Caco-2 (cell line): ENCODE measurements at regions of chr7 and their contacts with region 1.

Region 1: DNA sequence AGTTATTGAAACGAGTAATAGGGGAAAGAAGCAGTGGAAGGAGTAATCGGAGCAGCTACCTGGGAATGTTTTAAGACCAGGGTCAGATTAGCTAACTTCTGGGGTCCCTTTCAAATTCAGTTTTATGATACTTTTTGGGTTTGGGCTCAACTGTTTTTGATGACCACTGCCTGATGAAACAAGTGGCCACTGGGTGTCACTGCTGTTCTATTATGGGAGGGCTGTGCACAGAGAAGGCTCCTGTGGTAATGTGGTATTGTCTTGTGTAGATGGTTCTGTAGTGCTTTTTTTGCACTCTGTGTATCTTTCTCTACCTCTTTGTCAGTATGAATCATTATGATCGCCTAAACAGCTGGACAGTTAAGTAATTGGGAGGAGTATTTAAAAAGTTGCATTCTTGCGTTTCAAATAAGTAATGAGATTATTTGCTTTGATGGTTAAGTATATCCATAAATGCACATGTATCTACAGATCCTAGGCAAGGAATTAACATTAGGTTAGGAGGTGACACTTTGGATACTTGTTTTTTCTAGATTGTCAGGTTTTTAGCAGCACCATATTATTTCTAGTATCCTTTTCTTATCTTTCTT is 128.4 kb downstream of the ABCA13 start:
- DNase-seq: peak; percentile 50 to 68
- H3K4me3 ChIP-seq: no peak overlapping the region
- H3K4me3 Mint-ChIP-seq: no peak overlapping the region
- H3K27ac Mint-ChIP-seq: no peak overlapping the region
- H3K4me1 ChIP-seq: no peaks in the 10 kb centered on the region
- H3K4me1 Mint-ChIP-seq: no peaks in the 10 kb centered on the region
- H3K27me3 ChIP-seq: no peaks in the 10 kb centered on the region; the same call in 1 of the 2 replicates
- H3K27me3 Mint-ChIP-seq: peaks cover 12% of the 10 kb centered on the region
- CTCF ChIP-seq: peak; percentile 57 to 80

Region 2: GRCh38 chr7:48251766-48252165 is 47.9 kb before region 1 on chr7:
- CTCF ChIA-PET with region 1: no interaction called
- POLR2A ChIA-PET with region 1: no interaction called
- intact Hi-C with region 1: no loop called
- DNase-seq: no peak
- H3K4me3 ChIP-seq: no peak overlapping the region
- H3K4me3 Mint-ChIP-seq: no peak overlapping the region
- H3K27ac Mint-ChIP-seq: no peak overlapping the region
- H3K4me1 ChIP-seq: no peaks in the 10 kb centered on the region
- H3K4me1 Mint-ChIP-seq: no peaks in the 10 kb centered on the region
- H3K27me3 ChIP-seq: no peaks in the 10 kb centered on the region
- H3K27me3 Mint-ChIP-seq: peaks cover 6% of the 10 kb centered on the region
- CTCF ChIP-seq: no peak

Region 3: DNA sequence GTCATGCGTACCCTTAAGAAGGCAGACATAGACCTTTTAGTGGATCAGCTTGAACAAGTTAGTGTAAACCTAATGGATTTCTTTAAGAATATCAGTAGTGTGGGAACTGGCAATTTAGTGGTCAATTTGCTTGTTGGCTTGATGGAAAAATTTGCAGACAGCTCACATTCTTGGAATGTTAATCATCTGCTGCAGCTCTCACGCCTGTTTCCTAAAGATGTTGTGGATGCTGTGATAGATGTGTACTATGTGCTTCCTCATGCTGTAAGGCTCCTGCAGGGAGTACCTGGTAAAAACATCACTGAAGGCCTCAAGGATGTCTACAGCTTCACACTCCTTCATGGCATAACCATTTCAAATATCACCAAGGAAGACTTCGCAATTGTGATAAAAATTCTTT is 25.0 kb before region 1 on chr7:
- CTCF ChIA-PET with region 1: no interaction called
- POLR2A ChIA-PET with region 1: no interaction called
- intact Hi-C with region 1: no loop called
- DNase-seq: no peak
- H3K4me3 ChIP-seq: no peak overlapping the region
- H3K4me3 Mint-ChIP-seq: no peak overlapping the region
- H3K27ac Mint-ChIP-seq: no peak overlapping the region
- H3K4me1 ChIP-seq: no peaks in the 10 kb centered on the region
- H3K4me1 Mint-ChIP-seq: no peaks in the 10 kb centered on the region
- H3K27me3 ChIP-seq: no peaks in the 10 kb centered on the region
- H3K27me3 Mint-ChIP-seq: peaks cover 4% of the 10 kb centered on the region
- CTCF ChIP-seq: no peak

Region 4: DNA sequence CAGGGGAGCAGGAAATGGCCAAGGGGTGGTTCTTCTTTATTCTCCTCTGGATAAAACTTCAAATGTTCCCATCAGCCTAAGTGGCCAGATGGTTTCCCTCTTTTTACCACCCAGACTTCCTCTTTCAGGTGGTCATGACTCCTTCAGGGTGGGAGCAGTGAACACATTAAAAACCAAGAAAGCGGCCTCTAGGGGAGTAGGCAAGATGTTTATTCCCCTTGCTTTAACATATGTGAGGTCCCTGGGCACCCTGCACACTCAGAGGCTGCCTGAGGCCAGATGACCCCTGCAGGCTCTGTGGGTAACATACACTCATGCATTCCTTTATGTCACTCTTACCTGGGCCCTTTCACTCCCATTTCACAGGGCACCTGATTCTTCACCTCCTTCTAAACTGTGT is 229.0 kb after region 1 on chr7:
- CTCF ChIA-PET with region 1: no interaction called
- POLR2A ChIA-PET with region 1: no interaction called
- intact Hi-C with region 1: loop called (anchors 1 kb)
- DNase-seq: peak; percentile 23 to 48
- H3K4me3 ChIP-seq: no peak overlapping the region
- H3K4me3 Mint-ChIP-seq: no peak overlapping the region
- H3K27ac Mint-ChIP-seq: no peak overlapping the region
- H3K4me1 ChIP-seq: no peaks in the 10 kb centered on the region
- H3K4me1 Mint-ChIP-seq: no peaks in the 10 kb centered on the region
- H3K27me3 ChIP-seq: no peaks in the 10 kb centered on the region
- H3K27me3 Mint-ChIP-seq: peaks cover 5% of the 10 kb centered on the region
- CTCF ChIP-seq: peak in 1 of 2 experiments; percentile 22